ENCODE measurements at regions of chr10 and their contacts with region 1.

Region 1: GRCh38 chr10:72331601-72332422 is 22.9 kb downstream of the DNAJB12 start:
- DNase-seq: peak; percentile 31
- ATAC-seq: peak; percentile 52
- H3K4me3 ChIP-seq: no peak overlapping the region
- H3K27ac ChIP-seq: no peak overlapping the region
- H3K4me1 ChIP-seq: peaks cover 25% of the 10 kb centered on the region
- H3K27me3 ChIP-seq: no peaks in the 10 kb centered on the region
- CTCF ChIP-seq: no peak
- POLR2A ChIP-seq: no peak
- RAD21 ChIP-seq: no peak

Region 2: GRCh38 chr10:71957546-71958275 is 374.1 kb before region 1 on chr10:
- CTCF ChIA-PET with region 1: no interaction called
- POLR2A ChIA-PET with region 1: no interaction called
- dilution Hi-C with region 1: no loop called
- in situ Hi-C with region 1: loop called (anchors 10 kb)
- intact Hi-C with region 1: loop called (anchors 5 kb)
- DNase-seq: no peak
- ATAC-seq: no peak
- H3K4me3 ChIP-seq: no peak overlapping the region
- H3K27ac ChIP-seq: no peak overlapping the region
- H3K4me1 ChIP-seq: no peaks in the 10 kb centered on the region
- H3K27me3 ChIP-seq: peaks cover 9% of the 10 kb centered on the region
- CTCF ChIP-seq: peak; percentile 28; the same call in 1 of the 2 replicates
- POLR2A ChIP-seq: no peak
- RAD21 ChIP-seq: no peak

Region 3: GRCh38 chr10:72058989-72059842 is 272.6 kb before region 1 on chr10:
- CTCF ChIA-PET with region 1: no interaction called
- POLR2A ChIA-PET with region 1: no interaction called
- dilution Hi-C with region 1: no loop called
- in situ Hi-C with region 1: loop called (anchors 10 kb)
- intact Hi-C with region 1: no loop called
- DNase-seq: no peak
- ATAC-seq: peak; percentile 41; the same call in 1 of the 2 replicates
- H3K4me3 ChIP-seq: no peak overlapping the region
- H3K27ac ChIP-seq: no peak overlapping the region
- H3K4me1 ChIP-seq: no peaks in the 10 kb centered on the region
- H3K27me3 ChIP-seq: peaks cover 52% of the 10 kb centered on the region
- CTCF ChIP-seq: no peak
- POLR2A ChIP-seq: no peak
- RAD21 ChIP-seq: no peak

Region 4: GRCh38 chr10:72088889-72089575 is 242.8 kb before region 1 on chr10:
- CTCF ChIA-PET with region 1: no interaction called
- POLR2A ChIA-PET with region 1: no interaction called
- dilution Hi-C with region 1: no loop called
- in situ Hi-C with region 1: no loop called
- intact Hi-C with region 1: no loop called
- DNase-seq: no peak
- ATAC-seq: peak; percentile 21; the same call in 1 of the 2 replicates
- H3K4me3 ChIP-seq: no peak overlapping the region
- H3K27ac ChIP-seq: no peak overlapping the region
- H3K4me1 ChIP-seq: peaks cover 5% of the 10 kb centered on the region; the same call in 1 of the 2 replicates
- H3K27me3 ChIP-seq: peaks cover 59% of the 10 kb centered on the region
- CTCF ChIP-seq: no peak
- POLR2A ChIP-seq: no peak
- RAD21 ChIP-seq: no peak

Region 5: DNA sequence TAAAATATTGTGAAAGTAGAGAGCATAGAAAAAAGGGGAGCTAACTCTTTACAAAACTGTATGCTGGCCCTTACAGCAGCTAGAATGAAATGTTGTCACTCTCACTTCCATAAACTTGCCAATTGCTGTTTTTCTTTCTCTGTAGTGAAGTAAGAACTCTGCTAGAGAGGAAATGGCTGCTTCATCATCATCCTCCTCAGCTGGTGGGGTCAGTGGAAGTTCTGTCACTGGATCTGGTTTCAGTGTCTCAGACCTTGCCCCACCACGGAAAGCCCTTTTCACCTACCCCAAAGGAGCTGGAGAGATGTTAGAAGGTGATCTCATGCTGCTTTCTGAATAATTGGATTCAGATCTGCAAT is 108.1 kb before region 1 on chr10:
- CTCF ChIA-PET with region 1: interaction called, 4 read pairs
- POLR2A ChIA-PET with region 1: no interaction called
- dilution Hi-C with region 1: no loop called
- in situ Hi-C with region 1: no loop called
- intact Hi-C with region 1: loop called (anchors 1 kb)
- DNase-seq: peak; percentile 45
- ATAC-seq: no peak
- H3K4me3 ChIP-seq: no peak overlapping the region
- H3K27ac ChIP-seq: no peak overlapping the region; the same call in 1 of the 2 replicates
- H3K4me1 ChIP-seq: peaks cover 3% of the 10 kb centered on the region; the same call in 1 of the 2 replicates
- H3K27me3 ChIP-seq: no peaks in the 10 kb centered on the region
- CTCF ChIP-seq: no peak
- POLR2A ChIP-seq: no peak
- RAD21 ChIP-seq: no peak

Region 6: DNA sequence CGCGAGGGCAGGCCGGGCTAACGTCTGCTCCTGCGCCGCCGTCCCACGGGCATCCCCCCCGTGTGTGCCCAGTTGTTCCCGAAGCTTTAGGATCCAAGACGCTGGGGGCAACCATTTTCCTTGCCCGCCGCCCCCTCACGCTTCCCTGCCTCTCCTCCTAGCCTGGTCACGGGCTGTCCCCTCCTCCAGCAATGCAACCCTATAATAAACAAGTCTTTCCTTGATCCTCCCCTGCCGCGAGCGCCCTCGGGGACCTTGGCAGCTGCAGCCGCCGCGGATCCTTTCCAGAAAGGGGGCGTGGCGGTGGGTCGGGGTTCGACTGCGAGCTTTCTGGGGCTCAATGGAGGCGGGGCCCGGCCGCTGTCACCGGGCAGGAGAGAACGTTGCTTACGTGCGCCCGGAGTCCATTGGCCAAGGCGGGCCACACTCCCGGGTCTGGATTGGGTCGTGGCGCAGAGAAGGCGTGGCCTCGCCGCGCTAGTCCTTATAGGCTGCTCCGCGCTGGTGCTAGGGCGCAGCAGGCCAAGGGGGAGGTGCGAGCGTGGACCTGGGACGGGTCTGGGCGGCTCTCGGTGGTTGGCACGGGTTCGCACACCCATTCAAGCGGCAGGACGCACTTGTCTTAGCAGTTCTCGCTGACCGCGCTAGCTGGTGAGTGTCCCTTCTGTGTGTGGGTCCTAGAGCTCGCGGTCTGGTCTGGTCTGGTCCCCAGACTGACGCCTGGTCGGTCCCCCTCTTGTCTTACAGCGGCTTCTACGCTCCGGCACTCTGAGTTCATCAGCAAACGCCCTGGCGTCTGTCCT is 58.2 kb before region 1 on chr10 and contains the start of gene DDIT4:
- CTCF ChIA-PET with region 1: interaction called, 3 read pairs
- POLR2A ChIA-PET with region 1: no interaction called
- dilution Hi-C with region 1: no loop called
- in situ Hi-C with region 1: no loop called
- intact Hi-C with region 1: loop called (anchors 1 kb)
- DNase-seq: peak; percentile 99
- ATAC-seq: peak; percentile 83
- H3K4me3 ChIP-seq: peak within 1 kb of the TSS; percentile 80
- H3K27ac ChIP-seq: peak within 1 kb of the TSS; percentile 98
- H3K4me1 ChIP-seq: peaks cover 7% of the 10 kb centered on the region
- H3K27me3 ChIP-seq: no peaks in the 10 kb centered on the region
- CTCF ChIP-seq: 0 out of 2 replicates have a peak, but pooled peaks have one; percentile 0
- POLR2A ChIP-seq: peak; percentile 99
- RAD21 ChIP-seq: peak; percentile 14
- total RNA-seq, gene DDIT4: 108 and 110 TPM in 2 replicates